Prostate gland (tissue), 2 donors: ENCODE measurements at regions of chr9 and their contacts with region 1.

Region 1: GRCh38 chr9:34403554-34404380 is 27.1 kb upstream of the MYORG start:
- DNase-seq: peak; percentile 61
- H3K4me3 ChIP-seq: no peak overlapping the region
- H3K27ac ChIP-seq: no peak overlapping the region
- H3K4me1 ChIP-seq: no peaks in the 10 kb centered on the region
- H3K27me3 ChIP-seq: no peaks in the 10 kb centered on the region
- CTCF ChIP-seq: peak; percentile 88 to 94 (median 90)
- POLR2A ChIP-seq: no peak

Region 2: GRCh38 chr9:34178520-34179212 is 225.1 kb before region 1 on chr9 and contains the start of gene UBAP1:
- intact Hi-C with region 1: no loop called
- DNase-seq: peak; percentile 97
- H3K4me3 ChIP-seq: peak within 1 kb of the TSS; percentile 91 to 93
- H3K27ac ChIP-seq: peak within 1 kb of the TSS; percentile 97 to 99
- H3K4me1 ChIP-seq: no peaks in the 10 kb centered on the region
- H3K27me3 ChIP-seq: no peaks in the 10 kb centered on the region
- CTCF ChIP-seq: peak in 2 of 4 experiments; percentile 33
- POLR2A ChIP-seq: peak; percentile 99
- total RNA-seq, gene UBAP1: 38.3 to 72.2 TPM

Region 3: DNA sequence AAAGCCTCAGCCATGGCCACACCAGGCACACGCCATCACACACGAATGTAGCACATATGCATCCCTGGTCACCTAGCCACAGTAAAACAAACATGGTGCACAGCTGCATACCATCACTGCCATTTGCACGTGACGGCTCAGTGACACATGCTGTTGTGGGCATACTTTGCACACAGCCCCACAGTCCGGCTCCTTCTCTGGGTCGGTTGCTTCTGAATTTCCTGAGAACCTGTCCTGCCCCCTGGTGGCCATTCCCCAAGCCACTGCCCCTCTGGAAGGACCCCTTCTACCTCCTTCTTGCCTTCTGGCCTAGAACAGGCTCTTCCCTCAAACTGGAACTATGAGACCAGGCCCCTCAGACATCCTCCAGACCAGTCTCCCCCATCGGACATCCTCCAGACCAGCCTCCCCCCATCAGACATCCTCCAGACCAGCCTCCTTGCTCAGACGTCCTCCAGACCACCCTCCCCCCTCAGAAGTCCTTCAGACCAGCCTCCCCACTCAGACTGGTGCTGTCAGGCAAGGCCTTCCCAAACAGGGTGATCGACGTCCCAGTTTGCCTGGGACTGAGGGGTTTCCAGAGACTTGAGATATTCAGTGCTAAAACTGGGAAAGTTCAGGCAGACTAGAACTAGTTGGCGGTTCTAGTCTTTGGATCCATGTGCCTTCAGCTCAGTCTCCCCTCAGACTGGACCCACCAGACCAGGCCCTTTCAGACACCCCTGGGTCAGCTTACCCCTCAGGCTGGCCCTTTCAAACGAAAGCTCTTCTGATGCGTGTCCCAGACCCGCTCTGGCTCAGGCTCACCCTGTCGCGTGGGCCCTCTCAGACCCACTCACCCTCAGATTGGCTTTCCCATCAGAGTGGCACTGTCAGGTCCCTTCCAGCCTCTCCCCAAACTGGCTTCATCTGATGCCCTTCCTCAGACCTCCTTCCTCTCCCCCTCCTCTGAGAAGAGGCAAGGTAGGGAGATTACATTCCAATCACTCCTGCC is 143.4 kb after region 1 on chr9:
- intact Hi-C with region 1: loop called (anchors 2 kb)
- DNase-seq: peak; percentile 63
- H3K4me3 ChIP-seq: no peak overlapping the region
- H3K27ac ChIP-seq: no peak overlapping the region
- H3K4me1 ChIP-seq: peaks cover 6% of the 10 kb centered on the region
- H3K27me3 ChIP-seq: no peaks in the 10 kb centered on the region
- CTCF ChIP-seq: peak; percentile 64 to 89 (median 78)
- POLR2A ChIP-seq: no peak